A549 (cell line): ENCODE measurements at regions of chr21 and their contacts with region 1.

Region 1: DNA sequence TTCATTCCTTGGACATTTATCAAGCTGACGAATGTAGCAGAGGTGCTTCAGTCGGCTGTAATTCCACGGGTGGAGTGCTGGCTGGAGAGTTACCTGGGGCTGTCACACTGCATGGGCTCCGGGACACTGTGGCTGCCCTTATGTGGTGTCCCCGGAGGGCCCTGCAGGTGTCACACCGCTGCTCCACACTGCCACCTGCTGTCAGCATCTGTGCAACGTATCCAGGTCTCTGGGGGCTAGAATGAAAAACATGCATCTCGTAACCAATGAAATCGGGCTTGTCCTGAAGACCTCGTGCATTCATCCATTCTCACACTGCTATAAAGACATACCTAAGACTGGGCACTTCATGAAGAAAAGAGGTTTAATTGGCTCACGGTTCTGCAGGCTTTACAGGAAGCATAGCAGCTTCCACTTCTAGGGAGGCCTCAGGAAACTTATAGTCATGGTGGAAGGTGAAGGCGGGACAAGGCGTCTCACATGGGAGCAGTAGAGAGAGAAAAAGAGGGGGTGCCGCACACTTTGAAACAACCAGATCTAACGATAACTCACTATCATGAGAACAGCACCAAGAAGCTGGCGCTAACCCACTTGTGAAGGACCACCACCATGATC is 46.7 kb upstream of the PCBP3 start:
- DNase-seq: peak; percentile 53 to 74
- ATAC-seq: peak; percentile 85 to 95
- H3K4me3 ChIP-seq: no peak overlapping the region
- H3K27ac ChIP-seq: no peak overlapping the region
- H3K4me1 ChIP-seq: no peaks in the 10 kb centered on the region
- CTCF ChIP-seq: peak; percentile 66
- EP300 ChIP-seq: no peak
- POLR2A ChIP-seq: no peak
- RAD21 ChIP-seq: peak; percentile 55 to 64

Region 2: GRCh38 chr21:45583831-45584509 is 12.8 kb before region 1 on chr21:
- CTCF ChIA-PET with region 1: interaction called, 17 read pairs
- POLR2A ChIA-PET with region 1: no interaction called
- DNase-seq: no peak
- ATAC-seq: no peak
- H3K4me3 ChIP-seq: no peak overlapping the region
- H3K27ac ChIP-seq: no peak overlapping the region
- H3K4me1 ChIP-seq: no peaks in the 10 kb centered on the region
- CTCF ChIP-seq: no peak
- EP300 ChIP-seq: no peak
- POLR2A ChIP-seq: no peak
- RAD21 ChIP-seq: no peak

Region 3: DNA sequence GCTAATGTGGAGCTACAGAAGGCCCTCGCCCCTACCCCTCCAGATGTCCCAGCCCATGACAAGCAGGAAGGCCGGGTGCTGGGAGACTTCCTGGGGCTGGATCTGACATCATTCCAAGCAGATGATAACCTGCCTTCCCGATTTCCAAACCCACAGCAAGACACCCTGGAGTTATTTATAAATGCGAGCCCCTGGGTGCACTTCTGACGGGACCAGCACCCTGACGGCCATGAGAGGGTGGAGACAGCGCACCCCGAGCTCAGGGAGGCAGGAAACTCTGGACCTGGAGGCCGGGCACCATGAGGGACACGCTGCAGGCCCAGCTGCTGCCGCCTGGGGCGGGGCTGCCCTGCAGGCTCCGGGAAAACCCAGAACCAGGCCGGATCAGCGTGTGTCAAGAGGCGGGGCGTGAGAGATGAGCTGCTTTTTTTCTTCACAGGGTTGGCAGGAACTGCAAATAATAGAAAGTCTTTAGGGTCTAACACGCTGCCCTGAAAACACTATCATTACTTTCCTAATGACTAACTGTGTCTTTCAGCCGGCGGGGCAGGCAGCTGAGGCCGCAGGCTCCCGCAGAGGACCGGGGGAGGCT is 44.2 kb after region 1 on chr21:
- CTCF ChIA-PET with region 1: interaction called, 10 read pairs
- POLR2A ChIA-PET with region 1: no interaction called
- DNase-seq: peak in 1 of 2 experiments; percentile 30
- ATAC-seq: peak; percentile 27 to 44; a peak in 4 of 6 replicates
- H3K4me3 ChIP-seq: no peak overlapping the region
- H3K27ac ChIP-seq: no peak overlapping the region
- H3K4me1 ChIP-seq: no peaks in the 10 kb centered on the region
- CTCF ChIP-seq: no peak
- EP300 ChIP-seq: no peak
- POLR2A ChIP-seq: no peak
- RAD21 ChIP-seq: no peak